ENCODE measurements at regions of chr9 and their contacts with region 1.

Region 1: DNA sequence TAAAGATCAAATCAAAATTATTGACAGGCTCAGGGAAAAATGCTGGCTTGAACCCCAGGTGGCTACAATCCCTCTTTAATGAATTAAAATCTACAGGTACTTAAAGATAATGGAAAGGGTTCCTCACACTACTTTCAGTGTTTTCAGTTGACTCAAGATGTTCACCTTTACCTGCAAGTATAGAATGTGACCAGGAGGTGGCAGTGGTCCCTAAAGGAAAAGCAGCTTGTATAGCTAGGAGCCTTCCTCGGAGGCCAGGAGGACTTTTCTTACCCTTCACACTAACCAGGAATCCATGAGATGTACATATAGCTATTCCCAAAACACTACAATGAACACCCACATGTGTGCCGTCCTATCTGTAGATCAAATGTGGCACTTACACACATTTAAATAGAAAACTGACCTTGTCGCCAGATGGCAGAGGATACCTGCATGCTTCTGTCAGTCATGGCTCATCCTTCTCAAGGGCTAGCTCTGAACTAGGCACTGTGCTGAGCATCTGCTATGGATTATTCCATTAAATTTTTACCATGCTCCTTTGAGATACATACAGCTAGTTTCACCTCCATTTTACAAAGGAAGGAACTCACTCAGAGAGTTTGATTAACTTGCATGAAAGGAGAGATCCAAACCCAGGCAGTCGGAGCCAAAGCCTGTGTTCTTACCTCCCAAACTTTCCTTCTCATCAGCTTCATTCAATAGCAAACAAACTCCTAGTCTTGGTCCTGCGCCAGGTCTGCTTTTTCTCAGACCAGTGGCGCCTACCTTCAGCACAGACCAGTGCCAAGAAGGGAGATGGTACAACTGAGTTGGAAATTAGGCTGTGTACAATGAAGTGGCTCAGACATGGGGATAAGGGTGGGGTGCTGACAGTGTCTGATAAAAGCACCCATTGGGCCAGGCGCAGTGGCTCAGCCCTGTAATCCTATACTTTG is 24.5 kb downstream of the C9orf152 start:
- DNase-seq: no peak
- H3K4me3 ChIP-seq: no peak overlapping the region
- H3K27ac ChIP-seq: no peak overlapping the region
- H3K4me1 ChIP-seq: peaks cover 0 to 11% (median 0%) of the 10 kb centered on the region in 6 donors
- H3K27me3 ChIP-seq: no peaks in the 10 kb centered on the region
- CTCF ChIP-seq: peak; percentile 34 to 86 (median 69)
- POLR2A ChIP-seq: no peak

Region 2: GRCh38 chr9:109907400-109907799 is 276.1 kb before region 1 on chr9:
- intact Hi-C with region 1: no loop called
- DNase-seq: no peak
- H3K4me3 ChIP-seq: no peak overlapping the region
- H3K27ac ChIP-seq: peak overlapping the region; percentile 66 to 84 (median 74)
- H3K4me1 ChIP-seq: peaks cover 35 to 82% (median 58%) of the 10 kb centered on the region in 6 donors
- H3K27me3 ChIP-seq: no peaks in the 10 kb centered on the region
- CTCF ChIP-seq: no peak
- POLR2A ChIP-seq: no peak

Region 3: GRCh38 chr9:110623462-110624025 is 440.1 kb after region 1 on chr9:
- intact Hi-C with region 1: loop called (anchors 5 kb)
- DNase-seq: no peak
- H3K4me3 ChIP-seq: no peak overlapping the region
- H3K27ac ChIP-seq: no peak overlapping the region
- H3K4me1 ChIP-seq: no peaks in the 10 kb centered on the region
- H3K27me3 ChIP-seq: peaks cover 0 to 2% (median 0%) of the 10 kb centered on the region in 7 donors
- CTCF ChIP-seq: peak in 10 of 11 experiments; percentile 12 to 73 (median 59)
- POLR2A ChIP-seq: no peak

Measured in spleen (tissue), 13 donors.